Esophagus muscularis mucosa (tissue), 4 donors: ENCODE measurements at regions of chr18 and their contacts with region 1.

Region 1: GRCh38 chr18:24791751-24792560 is 331.5 kb downstream of the HRH4 start:
- DNase-seq: no peak
- H3K4me3 ChIP-seq: no peak overlapping the region
- H3K27ac ChIP-seq: no peak overlapping the region
- H3K4me1 ChIP-seq: peaks cover 0 to 11% (median 7%) of the 10 kb centered on the region in 4 donors
- H3K27me3 ChIP-seq: no peaks in the 10 kb centered on the region
- CTCF ChIP-seq: no peak
- EP300 ChIP-seq: no peak
- POLR2A ChIP-seq: no peak

Region 2: DNA sequence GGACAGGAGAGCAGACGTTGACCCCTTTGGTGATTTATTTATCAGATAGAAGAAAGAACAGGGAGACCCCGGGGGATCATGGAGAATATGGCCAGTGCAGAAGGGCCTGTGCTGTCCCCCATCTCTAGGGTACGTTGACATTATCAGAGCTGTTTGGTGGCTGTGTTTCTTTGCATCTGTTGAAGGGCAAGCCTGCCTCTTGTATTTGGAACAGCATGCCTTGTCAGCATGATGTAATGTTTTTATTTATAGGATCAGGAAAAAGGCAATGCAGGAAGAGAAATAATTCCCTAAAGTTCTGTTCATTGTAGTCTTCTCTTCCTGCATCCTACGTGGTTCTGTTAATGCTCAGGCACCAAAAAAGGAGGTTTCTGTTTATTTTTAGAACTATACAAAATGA is 702.9 kb before region 1 on chr18:
- intact Hi-C with region 1: no loop called
- DNase-seq: peak; percentile 68
- H3K4me3 ChIP-seq: no peak overlapping the region
- H3K27ac ChIP-seq: no peak overlapping the region
- H3K4me1 ChIP-seq: peaks cover 0 to 13% (median 9%) of the 10 kb centered on the region in 4 donors
- H3K27me3 ChIP-seq: no peaks in the 10 kb centered on the region
- CTCF ChIP-seq: no peak
- EP300 ChIP-seq: no peak
- POLR2A ChIP-seq: no peak

Region 3: DNA sequence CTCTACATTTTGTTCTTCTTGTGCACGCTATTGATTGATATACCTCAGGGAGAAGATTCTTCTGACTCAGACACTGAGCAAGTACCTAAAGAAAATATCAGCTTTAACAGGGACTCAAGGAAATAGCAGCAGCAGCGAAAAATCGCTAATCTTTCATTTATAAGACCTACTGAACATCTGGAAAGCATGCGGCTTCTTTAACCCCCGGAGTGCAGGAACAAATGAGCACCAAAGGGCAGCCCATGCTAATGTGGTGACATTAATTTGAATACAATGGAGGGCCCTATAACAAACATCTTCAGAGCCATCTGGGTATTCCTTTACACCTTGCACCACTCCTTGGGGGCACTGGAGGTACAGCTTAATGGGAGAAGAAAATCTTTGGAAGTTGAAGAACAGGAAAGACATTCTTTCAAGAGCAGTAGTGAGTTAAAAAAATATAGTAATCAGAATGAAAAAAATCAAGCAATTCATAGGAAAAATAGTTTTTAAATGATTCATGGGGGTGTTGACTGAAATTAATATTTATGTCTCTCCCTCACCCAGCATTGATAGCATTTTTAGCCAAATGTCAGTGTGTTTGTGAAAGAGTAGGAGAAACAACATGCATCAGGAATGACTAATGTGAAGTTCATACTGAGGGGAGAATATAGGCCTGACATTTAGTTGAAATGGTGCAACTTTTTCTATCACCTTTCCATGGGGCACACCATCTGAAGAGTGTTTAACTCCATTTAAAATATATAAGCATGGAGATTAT is 49.8 kb before region 1 on chr18:
- intact Hi-C with region 1: loop called (anchors 10 kb)
- DNase-seq: peak; percentile 31
- H3K4me3 ChIP-seq: no peak overlapping the region
- H3K27ac ChIP-seq: no peak overlapping the region
- H3K4me1 ChIP-seq: no peaks in the 10 kb centered on the region
- H3K27me3 ChIP-seq: no peaks in the 10 kb centered on the region
- CTCF ChIP-seq: no peak
- EP300 ChIP-seq: no peak
- POLR2A ChIP-seq: no peak